Heart left ventricle (tissue), 16 donors: ENCODE measurements at regions of chr1 and their contacts with region 1.

Region 1: DNA sequence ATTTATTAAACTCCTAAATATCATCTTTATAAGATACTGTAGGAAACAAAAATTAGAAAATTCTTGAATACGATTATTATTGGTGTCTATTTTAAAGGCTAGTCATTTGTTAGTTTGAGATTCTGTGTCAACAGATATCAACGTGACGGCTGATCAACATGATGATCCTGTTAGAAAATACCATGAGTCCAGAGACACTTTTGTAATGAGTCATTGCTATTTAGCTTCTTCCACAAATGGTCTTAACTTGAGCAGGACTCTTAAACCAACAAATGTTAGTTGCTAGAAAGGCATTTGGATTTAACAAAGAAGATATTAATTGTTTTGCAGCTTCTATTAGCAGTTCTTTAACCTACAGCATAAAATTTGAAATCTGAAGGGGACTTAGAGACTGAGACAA is 131.2 kb downstream of the TGFB2 start:
- DNase-seq: no peak
- ATAC-seq: no peak
- H3K4me3 ChIP-seq: no peak overlapping the region
- H3K27ac ChIP-seq: peak overlapping the region in 6 of 12 donors; percentile 9 to 66 (median 52)
- H3K4me1 ChIP-seq: peaks cover 0 to 64% (median 28%) of the 10 kb centered on the region in 12 donors
- H3K27me3 ChIP-seq: no peaks in the 10 kb centered on the region
- CTCF ChIP-seq: no peak
- POLR2A ChIP-seq: no peak

Region 2: GRCh38 chr1:218371927-218372672 is 104.3 kb before region 1 on chr1:
- intact Hi-C with region 1: loop called in 1 of 10 experiments (anchors 5 kb)
- DNase-seq: peak in 2 of 5 donors; percentile 36 to 39
- ATAC-seq: peak in 3 of 4 donors; percentile 67 to 74 (median 72)
- H3K4me3 ChIP-seq: peak overlapping the region in 1 of 12 donors; percentile 1
- H3K27ac ChIP-seq: peak overlapping the region in 10 of 12 donors; percentile 3 to 83 (median 64)
- H3K4me1 ChIP-seq: peaks cover 0 to 67% (median 37%) of the 10 kb centered on the region in 12 donors
- H3K27me3 ChIP-seq: no peaks in the 10 kb centered on the region
- CTCF ChIP-seq: no peak
- POLR2A ChIP-seq: no peak

Region 3: GRCh38 chr1:218735436-218736032 is 259.2 kb after region 1 on chr1:
- intact Hi-C with region 1: no loop called
- DNase-seq: peak in 1 of 5 donors; percentile 27
- ATAC-seq: peak; percentile 44 to 88 (median 75)
- H3K4me3 ChIP-seq: no peak overlapping the region
- H3K27ac ChIP-seq: peak overlapping the region in 4 of 12 donors; percentile 9 to 40 (median 18)
- H3K4me1 ChIP-seq: peaks cover 0 to 24% (median 8%) of the 10 kb centered on the region in 12 donors
- H3K27me3 ChIP-seq: no peaks in the 10 kb centered on the region
- CTCF ChIP-seq: no peak
- POLR2A ChIP-seq: no peak